Head of caudate nucleus (tissue), 42 donors: ENCODE measurements at regions of chr1 and their contacts with region 1.

Region 1: DNA sequence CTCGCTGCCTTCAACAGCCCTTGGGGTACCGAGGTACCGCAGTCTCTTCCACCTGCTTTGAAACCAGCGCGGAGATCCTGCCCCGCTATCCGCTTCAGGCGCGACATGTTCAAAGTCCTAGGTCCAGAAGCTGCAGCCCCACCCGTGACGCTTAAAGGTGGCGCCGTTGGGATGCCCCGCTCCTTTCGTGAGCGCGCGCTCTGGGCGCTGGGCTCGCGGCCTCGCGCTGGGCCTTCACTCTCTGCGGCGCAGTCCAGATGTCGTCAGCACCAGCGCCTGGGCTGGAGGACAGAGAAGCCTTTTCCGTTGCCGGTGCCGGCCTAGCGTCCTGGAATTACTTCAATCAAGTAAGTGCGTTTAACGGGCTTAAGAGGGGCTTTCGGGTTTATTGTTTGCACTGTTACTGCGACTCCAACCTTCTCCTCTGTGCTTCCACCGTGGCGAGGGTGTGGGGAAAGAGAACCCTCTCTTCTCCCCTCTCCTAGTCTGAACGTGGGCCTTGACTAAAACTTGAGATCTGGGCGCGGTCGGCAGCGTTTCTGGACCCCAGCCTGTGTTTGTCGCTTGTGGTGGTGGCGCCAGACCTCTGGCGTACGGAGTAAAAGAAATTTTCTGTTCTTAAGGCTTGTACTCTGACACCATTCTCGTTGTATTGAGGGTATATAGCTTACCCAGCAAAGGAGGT is at the start of gene LRRC40:
- DNase-seq: peak; percentile 93 to 99 (median 97)

Region 2: GRCh38 chr1:69952691-69953090 is 252.9 kb before region 1 on chr1:
- intact Hi-C with region 1: no loop called
- DNase-seq: no peak

Region 3: DNA sequence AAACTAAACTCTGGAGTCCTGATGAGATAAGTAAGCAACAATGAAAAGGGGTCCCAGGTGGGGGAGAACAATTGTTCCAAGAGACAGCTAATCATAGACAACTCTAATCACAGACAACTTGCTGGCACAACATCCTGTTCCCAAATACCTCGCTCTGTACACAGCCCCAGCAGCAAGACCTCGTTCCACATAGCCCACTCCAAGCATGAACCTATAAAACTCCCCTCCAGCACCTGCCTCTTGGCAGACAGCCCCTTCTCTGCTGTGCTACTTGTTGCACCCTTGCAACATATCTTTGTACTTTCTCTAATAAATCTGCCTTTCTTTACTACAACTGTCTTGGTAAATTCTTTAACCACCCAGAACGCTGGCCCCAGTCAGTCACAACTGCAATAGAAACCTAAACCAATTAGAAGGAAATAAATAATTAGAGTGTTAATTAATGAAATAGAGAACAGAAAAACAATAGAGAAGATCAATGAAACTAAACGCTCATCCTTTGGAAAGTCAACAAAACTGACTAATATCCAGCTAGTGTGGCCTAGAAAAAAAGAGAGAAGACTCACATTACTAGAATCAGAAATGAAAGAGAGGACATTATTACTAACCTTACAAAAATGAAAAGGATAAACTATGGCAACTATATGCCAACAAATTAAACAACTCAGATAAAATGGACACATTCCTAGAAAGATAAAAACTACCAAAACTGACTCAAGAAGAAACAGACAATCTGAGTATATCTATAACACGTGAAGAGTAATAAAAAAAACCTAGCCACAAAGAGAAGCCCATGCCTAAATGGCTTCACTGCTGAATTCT is 36.3 kb before region 1 on chr1:
- intact Hi-C with region 1: no loop called
- DNase-seq: no peak

Region 4: DNA sequence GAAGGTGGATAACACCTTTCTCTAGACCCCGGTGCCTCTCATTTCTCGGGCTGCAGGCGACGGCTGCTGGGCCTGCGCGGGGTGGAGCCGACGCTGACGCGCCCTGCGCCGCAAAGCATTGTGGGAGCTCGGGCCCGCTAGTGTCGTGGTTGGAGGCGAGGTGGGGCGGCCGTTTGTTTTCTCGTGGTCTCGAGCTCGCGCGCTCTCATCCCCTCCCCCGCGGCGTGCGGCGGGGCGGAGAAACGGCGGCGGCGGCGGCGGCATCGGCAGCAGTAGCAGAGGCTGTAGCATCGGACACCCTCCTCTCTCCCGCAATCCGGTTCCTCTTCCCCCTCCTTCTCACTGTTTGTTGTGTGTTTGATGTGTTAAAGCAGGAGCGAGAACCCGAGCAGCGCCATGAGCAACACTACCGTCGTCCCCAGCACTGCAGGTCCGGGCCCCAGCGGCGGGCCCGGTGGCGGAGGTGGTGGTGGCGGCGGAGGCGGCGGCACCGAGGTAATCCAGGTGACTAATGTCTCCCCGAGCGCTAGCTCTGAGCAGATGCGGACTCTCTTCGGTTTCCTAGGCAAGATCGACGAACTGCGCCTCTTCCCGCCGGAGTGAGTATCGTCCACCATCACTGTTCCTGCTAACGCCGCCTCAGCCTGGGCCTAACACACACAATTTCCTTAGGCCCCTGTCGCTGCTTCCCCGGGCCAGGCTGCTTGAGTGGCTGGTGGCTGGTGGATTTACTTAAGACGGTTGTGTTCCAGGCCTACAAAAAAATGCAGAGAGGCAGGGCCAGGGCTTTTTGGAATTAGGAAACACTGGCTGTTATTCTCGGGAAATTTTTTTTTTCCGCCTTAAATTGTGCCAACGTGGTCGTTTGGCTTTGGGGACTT is 15.9 kb after region 1 on chr1 and contains the start of gene SRSF11:
- intact Hi-C with region 1: loop called (anchors 2 kb)
- DNase-seq: peak; percentile 89 to 99 (median 97)

Region 5: DNA sequence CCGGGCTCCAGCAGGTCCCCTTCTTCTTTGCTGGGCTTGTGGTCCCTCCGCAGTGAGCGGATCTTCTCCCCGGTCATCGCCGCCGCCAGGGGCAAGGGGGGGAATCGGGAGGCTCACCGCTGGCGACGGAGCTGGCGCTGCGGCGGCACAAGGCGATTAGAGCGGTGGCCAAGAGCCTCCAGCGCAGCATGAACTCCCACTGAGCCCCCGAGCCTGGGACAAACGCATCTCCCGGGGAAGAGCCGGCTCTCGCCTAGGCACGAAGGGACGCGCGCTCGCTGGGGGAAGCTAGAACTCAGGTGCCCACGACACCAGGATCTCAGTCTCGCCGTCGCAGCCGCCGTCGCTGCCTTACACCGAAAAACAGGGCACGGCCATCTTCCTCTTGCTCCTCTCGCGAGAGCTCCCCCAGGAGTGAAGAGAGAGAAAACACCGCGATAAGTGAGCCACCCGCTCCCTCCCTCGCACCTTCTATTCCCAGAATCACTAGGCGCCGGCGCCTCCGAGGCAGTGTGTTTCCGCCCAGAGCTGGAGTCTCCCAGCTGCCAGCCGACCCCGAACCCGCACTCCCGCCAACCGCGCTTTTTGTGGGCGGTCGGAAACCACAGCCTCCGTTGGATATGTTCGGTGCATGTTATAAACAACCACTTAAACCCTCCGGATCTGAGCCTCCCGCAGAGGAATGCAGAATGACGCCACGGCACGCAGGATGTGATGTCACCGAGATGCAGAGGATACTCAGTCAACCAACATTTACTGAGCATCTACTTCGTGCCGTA is 148.9 kb after region 1 on chr1 and contains the start of gene ANKRD13C:
- intact Hi-C with region 1: loop called (anchors 10 kb)
- DNase-seq: peak; percentile 83 to 98 (median 94)